Endothelial cell of umbilical vein (primary cell): ENCODE measurements at regions of chr7 and their contacts with region 1.

Region 1: GRCh38 chr7:157189405-157189804 is 50.7 kb downstream of the UBE3C start:
- DNase-seq: peak; percentile 46
- H3K4me3 ChIP-seq: no peak overlapping the region
- H3K27ac ChIP-seq: no peak overlapping the region
- H3K4me1 ChIP-seq: peaks cover 3% of the 10 kb centered on the region
- H3K27me3 ChIP-seq: no peaks in the 10 kb centered on the region
- CTCF ChIP-seq: no peak
- POLR2A ChIP-seq: no peak

Region 2: DNA sequence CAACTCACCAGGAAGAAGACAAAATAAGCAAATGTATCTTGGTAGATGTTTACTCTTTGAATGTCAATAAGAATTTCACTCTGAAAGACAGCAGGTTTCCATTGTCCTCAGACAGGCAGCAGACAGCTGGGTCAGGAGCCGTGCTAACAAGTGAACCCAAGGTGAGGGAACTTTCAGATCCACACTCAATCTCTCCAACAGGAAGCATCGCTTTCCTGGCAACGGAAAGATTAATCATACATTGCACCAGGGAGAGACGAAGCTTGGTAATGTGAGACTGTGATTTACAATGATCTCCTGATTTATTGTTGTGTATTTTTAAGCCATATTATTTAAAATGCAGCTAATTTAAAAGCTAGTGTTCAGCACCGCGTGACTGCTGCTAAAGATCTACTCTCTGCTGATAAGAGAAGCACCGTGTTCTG is 257.4 kb before region 1 on chr7:
- CTCF ChIA-PET with region 1: no interaction called
- POLR2A ChIA-PET with region 1: no interaction called
- dilution Hi-C with region 1: no loop called
- intact Hi-C with region 1: no loop called
- DNase-seq: peak; percentile 97
- H3K4me3 ChIP-seq: peak overlapping the region in 1 of 3 experiments; percentile 24
- H3K27ac ChIP-seq: peak overlapping the region; percentile 82
- H3K4me1 ChIP-seq: peaks cover 34% of the 10 kb centered on the region
- H3K27me3 ChIP-seq: no peaks in the 10 kb centered on the region
- CTCF ChIP-seq: no peak
- POLR2A ChIP-seq: peak; percentile 27

Region 3: GRCh38 chr7:157211690-157212089 is 22.3 kb after region 1 on chr7:
- CTCF ChIA-PET with region 1: no interaction called
- POLR2A ChIA-PET with region 1: no interaction called
- dilution Hi-C with region 1: no loop called
- intact Hi-C with region 1: loop called (anchors 1 kb)
- DNase-seq: no peak
- H3K4me3 ChIP-seq: no peak overlapping the region
- H3K27ac ChIP-seq: no peak overlapping the region
- H3K4me1 ChIP-seq: no peaks in the 10 kb centered on the region
- H3K27me3 ChIP-seq: no peaks in the 10 kb centered on the region
- CTCF ChIP-seq: no peak
- POLR2A ChIP-seq: no peak

Region 4: GRCh38 chr7:157238087-157238486 is 48.7 kb after region 1 on chr7:
- CTCF ChIA-PET with region 1: no interaction called
- POLR2A ChIA-PET with region 1: no interaction called
- dilution Hi-C with region 1: no loop called
- intact Hi-C with region 1: no loop called
- DNase-seq: no peak
- H3K4me3 ChIP-seq: no peak overlapping the region
- H3K27ac ChIP-seq: no peak overlapping the region
- H3K4me1 ChIP-seq: peaks cover 11% of the 10 kb centered on the region
- H3K27me3 ChIP-seq: no peaks in the 10 kb centered on the region
- CTCF ChIP-seq: no peak
- POLR2A ChIP-seq: no peak